ENCODE measurements at regions of chr5 and their contacts with region 1.

Region 1: DNA sequence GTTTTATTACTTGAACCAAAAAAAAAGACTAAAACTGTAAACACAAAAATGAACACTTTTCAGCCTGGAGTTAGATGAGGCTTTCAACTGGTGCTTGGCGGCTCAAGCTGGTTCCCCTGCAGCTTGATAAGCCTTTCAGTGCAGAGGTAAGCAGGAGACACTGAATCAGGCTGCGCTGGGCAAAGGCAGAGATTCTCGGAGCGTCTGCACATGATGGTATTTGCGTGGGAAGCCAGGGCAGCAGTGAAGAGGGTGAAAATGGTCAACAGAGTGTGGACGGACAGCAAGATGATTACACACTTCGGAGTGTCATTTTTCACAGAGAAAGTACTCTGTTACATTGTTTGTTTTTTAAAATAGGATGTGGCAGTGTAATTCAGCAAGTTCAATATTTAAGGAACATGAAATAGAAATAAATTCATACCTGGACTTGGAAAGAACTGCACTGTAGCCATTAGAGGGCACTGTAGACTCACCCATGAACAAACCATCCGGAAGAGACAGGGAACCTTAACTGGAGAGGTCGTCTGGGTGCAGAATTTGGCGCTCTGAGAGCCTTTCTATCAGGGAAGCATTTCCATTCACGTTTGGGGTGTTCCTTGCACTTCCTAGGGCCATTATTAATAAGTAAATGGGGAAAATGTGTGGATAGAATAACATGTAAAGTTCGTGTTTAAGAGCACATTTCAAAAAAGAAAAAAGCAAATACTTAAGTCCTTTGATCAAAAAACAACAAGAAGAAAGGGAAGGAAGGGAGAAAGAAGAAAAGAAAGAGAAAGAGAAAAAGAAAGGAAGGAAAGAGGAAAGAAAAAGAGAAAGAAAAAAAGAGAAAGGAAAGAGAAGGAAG is 69.8 kb downstream of the ICE1 start:
- DNase-seq: peak; percentile 49
- H3K4me3 ChIP-seq: no peak overlapping the region
- H3K27ac ChIP-seq: no peak overlapping the region
- H3K4me1 ChIP-seq: peaks cover 3% of the 10 kb centered on the region
- H3K27me3 ChIP-seq: peaks cover 0 to 7% of the 10 kb centered on the region in 2 experiments
- CTCF ChIP-seq: peak; percentile 62
- POLR2A ChIP-seq: no peak

Region 2: DNA sequence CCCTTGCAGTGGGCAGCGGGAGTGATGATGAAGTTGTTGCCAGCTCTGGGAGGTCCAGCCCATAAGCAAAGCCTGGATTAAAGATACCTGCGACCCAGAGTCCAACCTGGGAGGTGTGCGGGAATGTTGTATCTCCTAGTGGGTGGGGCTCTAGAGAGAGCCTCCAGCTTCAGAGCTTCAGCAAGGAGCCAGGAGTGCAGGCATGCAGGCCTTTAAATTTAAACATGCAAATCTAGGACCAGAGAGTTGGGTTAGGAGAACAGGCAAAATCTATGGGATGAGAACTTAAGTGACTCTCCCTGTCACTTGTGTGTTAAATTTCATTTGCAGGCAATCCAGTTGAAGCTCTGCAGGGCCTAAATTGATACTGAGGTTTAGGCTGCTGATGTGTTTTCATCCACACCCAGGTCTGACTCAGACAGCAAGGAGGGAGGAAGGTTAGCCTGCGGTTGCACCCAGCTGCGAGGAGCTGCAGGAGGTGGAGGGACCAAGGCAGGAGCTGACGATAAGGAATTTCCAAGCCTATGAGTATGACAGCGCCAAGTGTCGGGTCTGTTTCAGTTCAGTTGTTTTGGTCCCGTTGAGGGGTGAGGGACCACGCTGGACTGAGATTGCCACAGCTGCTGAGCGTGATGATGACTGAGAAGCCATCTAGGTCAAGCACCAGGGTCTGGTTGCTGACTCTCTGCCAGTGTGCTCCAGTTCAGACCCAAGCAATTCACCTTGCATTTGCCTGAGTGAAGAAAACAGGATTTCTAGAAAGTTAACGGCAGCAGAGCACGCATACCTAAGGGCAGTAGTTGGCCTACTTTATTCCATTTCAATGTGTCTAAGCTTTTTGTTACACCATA is 173.1 kb after region 1 on chr5:
- CTCF ChIA-PET with region 1: no interaction called
- POLR2A ChIA-PET with region 1: no interaction called
- dilution Hi-C with region 1: no loop called
- intact Hi-C with region 1: no loop called
- DNase-seq: no peak
- H3K4me3 ChIP-seq: no peak overlapping the region
- H3K27ac ChIP-seq: no peak overlapping the region
- H3K4me1 ChIP-seq: no peaks in the 10 kb centered on the region
- H3K27me3 ChIP-seq: no peaks in the 10 kb centered on the region
- CTCF ChIP-seq: no peak
- POLR2A ChIP-seq: no peak

Region 3: GRCh38 chr5:6291961-6292360 is 799.7 kb after region 1 on chr5:
- CTCF ChIA-PET with region 1: no interaction called
- POLR2A ChIA-PET with region 1: no interaction called
- dilution Hi-C with region 1: no loop called
- intact Hi-C with region 1: loop called (anchors 10 kb)
- DNase-seq: peak; percentile 49
- H3K4me3 ChIP-seq: no peak overlapping the region
- H3K27ac ChIP-seq: no peak overlapping the region
- H3K4me1 ChIP-seq: no peaks in the 10 kb centered on the region
- H3K27me3 ChIP-seq: no peaks in the 10 kb centered on the region
- CTCF ChIP-seq: peak; percentile 20 to 43
- POLR2A ChIP-seq: no peak

Region 4: DNA sequence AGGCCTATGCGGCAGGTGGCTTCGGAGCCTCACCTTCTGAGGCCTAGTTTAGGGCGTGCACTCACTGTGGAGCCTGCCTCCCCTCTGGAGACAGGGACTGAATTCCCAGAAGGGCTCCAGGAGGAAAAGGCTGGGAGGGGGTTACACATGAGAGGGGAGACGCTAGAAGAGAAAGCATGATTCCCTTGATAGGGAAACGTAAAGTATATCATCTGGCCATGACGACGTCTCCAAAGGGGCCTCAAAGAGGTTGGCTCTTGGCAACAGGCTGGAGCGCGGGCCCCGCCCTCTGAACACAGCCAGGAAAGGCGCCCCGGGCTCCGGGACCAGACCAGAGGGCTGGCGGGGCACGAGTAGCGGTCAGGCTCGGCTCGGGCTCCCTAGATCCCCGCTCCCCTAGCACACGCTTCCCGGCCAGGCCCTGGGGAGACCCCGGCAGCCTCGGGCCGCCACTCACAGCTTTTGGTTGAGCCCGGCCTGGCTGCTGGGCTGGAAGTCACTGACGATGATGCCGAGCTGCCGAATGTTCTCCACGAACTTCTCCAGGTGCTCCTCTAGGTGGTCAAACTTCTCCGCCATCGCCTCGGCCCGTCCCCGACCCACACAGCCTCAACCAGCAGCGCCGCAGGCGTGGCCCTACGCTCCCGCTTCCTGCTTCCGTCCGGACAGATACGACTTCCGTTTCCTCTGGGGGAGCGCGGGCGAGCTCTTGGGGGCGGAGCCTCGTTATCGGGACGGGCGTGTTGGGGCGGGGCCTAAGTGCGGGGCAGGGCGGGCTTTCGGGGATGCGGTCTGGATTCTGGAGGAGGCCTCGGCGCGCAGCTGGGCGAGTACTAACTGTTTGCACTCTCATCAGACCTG is 885.8 kb after region 1 on chr5 and contains the start of gene MED10:
- CTCF ChIA-PET with region 1: no interaction called
- POLR2A ChIA-PET with region 1: no interaction called
- dilution Hi-C with region 1: no loop called
- intact Hi-C with region 1: loop called (anchors 10 kb)
- DNase-seq: peak; percentile 88
- H3K4me3 ChIP-seq: peak within 1 kb of the TSS; percentile 51 to 76 (median 71)
- H3K27ac ChIP-seq: peak within 1 kb of the TSS; percentile 86
- H3K4me1 ChIP-seq: peaks cover 28% of the 10 kb centered on the region
- H3K27me3 ChIP-seq: no peaks in the 10 kb centered on the region
- CTCF ChIP-seq: no peak
- POLR2A ChIP-seq: peak; percentile 87
- total RNA-seq, gene MED10: 55.6 and 57.8 TPM in 2 replicates

Region 5: DNA sequence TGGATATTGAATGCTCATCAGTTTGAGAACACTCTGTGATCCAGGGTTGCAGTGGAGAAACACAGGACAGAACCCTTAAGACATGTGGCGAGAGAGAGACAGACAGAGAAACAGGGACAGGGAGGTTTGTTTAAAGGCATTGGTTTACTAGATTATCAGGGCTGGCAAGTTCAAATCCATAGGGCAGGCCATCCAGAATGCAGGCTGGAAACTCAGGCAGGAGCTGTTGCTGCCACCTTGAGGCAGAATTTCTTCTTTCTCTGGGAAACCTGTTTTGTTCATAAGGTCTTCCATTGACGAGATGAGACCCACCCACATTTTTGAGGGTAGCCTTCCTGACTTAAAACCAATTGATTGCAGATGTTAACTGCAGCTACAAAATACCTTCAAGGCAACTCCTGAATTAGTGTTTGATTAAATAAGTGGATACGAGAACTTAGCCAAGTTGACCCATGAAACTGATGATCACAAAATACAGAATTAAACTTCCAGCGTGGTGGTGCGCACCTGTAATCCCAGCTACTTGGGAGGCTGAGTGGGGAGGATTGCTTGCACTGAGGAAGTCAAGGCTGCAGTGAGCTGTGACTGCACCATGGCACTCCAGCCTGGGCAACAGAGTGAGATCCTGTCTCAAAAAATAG is 1084.7 kb after region 1 on chr5:
- CTCF ChIA-PET with region 1: interaction called, 14 read pairs
- POLR2A ChIA-PET with region 1: no interaction called
- dilution Hi-C with region 1: no loop called
- intact Hi-C with region 1: loop called (anchors 1 kb)
- DNase-seq: peak; percentile 72
- H3K4me3 ChIP-seq: no peak overlapping the region
- H3K27ac ChIP-seq: no peak overlapping the region
- H3K4me1 ChIP-seq: peaks cover 8% of the 10 kb centered on the region
- H3K27me3 ChIP-seq: peaks cover 18% of the 10 kb centered on the region in 2 experiments
- CTCF ChIP-seq: peak; percentile 66 to 71
- POLR2A ChIP-seq: no peak

Region 6: DNA sequence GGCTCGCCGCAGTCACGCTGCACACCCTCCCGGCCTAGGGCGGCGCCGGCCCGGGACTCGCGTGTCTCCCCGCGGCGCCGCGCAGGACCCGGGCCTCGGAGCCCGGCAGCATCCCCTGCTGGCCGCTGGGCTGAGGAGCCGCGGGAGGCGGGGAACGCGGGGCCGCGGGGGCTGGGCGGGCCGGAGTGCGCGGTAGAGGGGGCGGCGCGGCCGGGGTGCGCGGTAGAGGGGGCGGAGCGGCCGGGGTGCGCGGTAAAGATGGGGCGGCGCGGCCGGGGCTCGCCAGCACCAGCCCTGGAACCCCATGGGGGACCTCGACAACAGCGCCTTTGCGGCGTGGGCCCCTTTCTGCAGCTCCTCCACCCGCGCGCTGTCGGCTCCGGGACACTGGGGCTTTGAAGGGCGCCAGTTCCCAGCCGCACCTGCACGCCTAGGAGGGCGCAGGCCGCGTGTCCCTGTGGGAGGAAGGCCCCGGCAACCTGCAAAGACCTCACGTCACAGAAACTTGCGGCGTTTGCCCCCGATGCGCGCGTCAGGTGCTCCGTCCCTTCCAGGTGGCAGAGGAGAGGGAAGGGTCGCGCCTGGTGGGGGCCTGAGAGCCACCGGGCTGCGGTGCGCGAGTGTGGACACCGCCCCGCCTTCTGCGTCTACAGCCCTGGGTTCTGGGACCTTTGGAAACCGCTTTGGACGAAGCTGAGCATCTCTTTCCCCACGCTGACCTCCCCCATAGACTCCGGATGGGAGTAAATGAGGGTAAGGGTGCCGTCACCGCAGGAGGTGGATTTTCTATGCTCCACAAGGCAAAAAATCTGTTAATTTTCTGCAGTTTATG is 1091.0 kb after region 1 on chr5:
- CTCF ChIA-PET with region 1: interaction called, 14 read pairs
- POLR2A ChIA-PET with region 1: no interaction called
- dilution Hi-C with region 1: no loop called
- intact Hi-C with region 1: no loop called
- DNase-seq: no peak
- H3K4me3 ChIP-seq: peak overlapping the region in 1 of 3 experiments; percentile 11
- H3K27ac ChIP-seq: no peak overlapping the region
- H3K4me1 ChIP-seq: peaks cover 13% of the 10 kb centered on the region
- H3K27me3 ChIP-seq: peaks cover 25 to 30% of the 10 kb centered on the region in 2 experiments
- CTCF ChIP-seq: peak; percentile 35 to 41
- POLR2A ChIP-seq: no peak

Region 7: DNA sequence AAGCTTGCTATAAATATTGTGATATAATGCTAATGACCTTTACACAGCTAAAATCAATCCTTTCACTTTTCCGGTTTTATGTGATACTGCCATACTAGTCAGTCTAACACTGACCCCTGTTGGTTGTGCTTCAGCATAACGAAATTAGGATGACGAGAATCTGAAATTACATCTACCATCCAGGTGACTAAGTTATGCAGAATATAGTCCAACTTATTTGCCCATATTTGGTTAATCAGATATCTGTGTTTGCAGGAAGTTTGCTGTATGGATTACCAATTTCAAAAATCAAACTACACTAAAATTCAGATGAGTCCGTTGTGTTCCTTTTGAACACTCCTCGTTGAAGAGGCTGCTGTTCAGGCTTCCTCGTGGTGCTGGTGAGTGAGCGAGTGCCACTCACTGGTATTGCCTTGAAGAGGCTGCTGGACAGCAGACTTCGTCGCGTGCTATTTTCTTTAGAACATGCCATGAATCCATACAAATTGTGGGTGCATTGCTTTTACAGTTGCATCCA is 1253.5 kb after region 1 on chr5:
- CTCF ChIA-PET with region 1: interaction called, 17 read pairs
- POLR2A ChIA-PET with region 1: no interaction called
- dilution Hi-C with region 1: no loop called
- intact Hi-C with region 1: loop called (anchors 10 kb)
- DNase-seq: peak; percentile 70
- H3K4me3 ChIP-seq: no peak overlapping the region
- H3K27ac ChIP-seq: no peak overlapping the region
- H3K4me1 ChIP-seq: no peaks in the 10 kb centered on the region
- H3K27me3 ChIP-seq: no peaks in the 10 kb centered on the region
- CTCF ChIP-seq: peak; percentile 61 to 65
- POLR2A ChIP-seq: no peak

Measured in endothelial cell of umbilical vein (primary cell).